Activated CD8-positive, alpha-beta T cell treated with anti-CD3 and anti-CD28 coated beads, Interleukin-2, amount 10 ng/mL, durations not matched to agents 7 days and 5 days (primary cell): ENCODE measurements at regions of chr14 and their contacts with region 1.

Region 1: GRCh38 chr14:104768437-104769323 is 15.7 kb downstream of the SIVA1 start:
- DNase-seq: peak; percentile 94
- ATAC-seq: peak; percentile 93
- H3K4me3 Mint-ChIP-seq: no peak overlapping the region
- H3K27ac Mint-ChIP-seq: peak overlapping the region; percentile 52
- H3K4me1 Mint-ChIP-seq: peaks cover 6% of the 10 kb centered on the region
- H3K27me3 Mint-ChIP-seq: no peaks in the 10 kb centered on the region

Region 2: DNA sequence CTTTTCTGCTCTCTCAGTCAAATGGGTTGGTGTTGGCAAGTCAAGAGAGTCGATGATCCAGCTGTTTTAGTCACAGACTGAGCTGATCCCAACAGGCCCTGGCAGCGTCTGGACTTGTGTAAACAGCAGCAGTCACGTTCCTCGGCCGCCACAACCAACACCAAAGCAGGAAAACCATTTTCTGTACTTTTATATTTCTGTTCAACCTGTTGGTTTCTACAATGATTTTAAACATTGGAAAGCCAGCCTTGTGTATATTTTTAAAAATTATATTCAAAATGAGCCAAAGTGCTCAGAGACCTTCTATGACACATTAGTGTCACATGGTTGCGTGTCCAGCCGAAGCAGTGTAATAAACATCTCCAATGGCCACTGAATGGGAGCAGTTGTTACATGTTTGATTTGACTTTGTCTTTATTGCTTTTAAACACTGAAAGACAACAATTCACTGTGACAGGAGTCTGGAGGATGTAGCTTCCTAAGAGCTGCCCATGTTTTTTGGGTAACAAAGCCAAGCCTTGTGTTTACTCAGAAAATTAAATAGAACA is 21.7 kb before region 1 on chr14:
- CTCF ChIA-PET with region 1: interaction called, 12 read pairs
- POLR2A ChIA-PET with region 1: no interaction called
- DNase-seq: no peak
- ATAC-seq: no peak
- H3K4me3 Mint-ChIP-seq: no peak overlapping the region
- H3K27ac Mint-ChIP-seq: no peak overlapping the region
- H3K4me1 Mint-ChIP-seq: peaks cover 33% of the 10 kb centered on the region
- H3K27me3 Mint-ChIP-seq: no peaks in the 10 kb centered on the region

Region 3: GRCh38 chr14:104752735-104753531 is 15.7 kb before region 1 on chr14 and contains the start of gene SIVA1:
- CTCF ChIA-PET with region 1: interaction called, 17 read pairs
- POLR2A ChIA-PET with region 1: interaction called, 9 read pairs
- DNase-seq: peak; percentile 100
- ATAC-seq: peak; percentile 94
- H3K4me3 Mint-ChIP-seq: peak within 1 kb of the TSS; percentile 91
- H3K27ac Mint-ChIP-seq: peak within 1 kb of the TSS; percentile 96
- H3K4me1 Mint-ChIP-seq: peaks cover 54% of the 10 kb centered on the region
- H3K27me3 Mint-ChIP-seq: no peaks in the 10 kb centered on the region
- total RNA-seq, gene SIVA1: 175 to 186 TPM

Region 4: DNA sequence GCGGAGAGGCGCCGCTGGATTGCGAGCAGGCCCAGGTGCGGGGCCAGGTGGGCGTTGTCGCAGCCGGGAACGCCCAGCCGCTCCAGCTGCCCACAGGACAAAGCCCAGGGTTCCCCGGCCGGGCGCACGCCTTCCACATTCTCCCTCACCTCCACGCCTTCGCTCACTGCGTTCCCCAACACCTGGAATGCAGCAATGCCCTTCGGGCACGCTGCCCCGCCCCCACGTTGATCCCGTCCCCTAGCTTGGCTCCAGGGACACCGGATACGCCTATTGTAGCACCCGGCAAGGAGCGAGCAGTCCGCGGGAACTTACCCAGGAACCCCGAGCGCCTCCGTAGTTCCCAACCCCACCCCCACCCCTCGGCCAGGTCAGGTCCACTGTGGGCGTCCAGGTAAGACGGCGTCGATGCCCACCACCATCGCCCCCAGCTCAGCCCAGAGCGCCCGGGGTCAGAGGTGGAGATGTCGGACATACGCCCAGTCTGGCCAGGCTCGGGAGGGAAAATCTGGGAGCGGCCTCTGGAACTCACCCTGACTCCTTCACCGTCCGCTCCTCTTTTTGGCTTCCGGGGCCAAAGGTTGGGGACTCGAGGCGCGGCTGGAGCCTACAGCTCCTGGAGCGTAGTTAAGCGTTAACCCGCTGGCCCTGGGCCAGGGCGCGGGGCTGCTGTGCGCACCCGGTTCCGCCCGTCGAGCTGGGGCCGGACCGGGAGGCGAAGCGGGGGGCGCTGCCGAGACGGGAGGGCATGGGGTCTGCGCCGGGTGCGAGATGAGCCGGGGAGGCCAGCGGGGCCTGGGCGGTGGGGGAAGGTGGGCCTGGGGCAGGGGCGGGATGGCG is 95.8 kb after region 1 on chr14:
- CTCF ChIA-PET with region 1: no interaction called
- POLR2A ChIA-PET with region 1: no interaction called
- DNase-seq: no peak
- ATAC-seq: no peak
- H3K4me3 Mint-ChIP-seq: peak overlapping the region; percentile 45
- H3K27ac Mint-ChIP-seq: no peak overlapping the region
- H3K4me1 Mint-ChIP-seq: peaks cover 6% of the 10 kb centered on the region
- H3K27me3 Mint-ChIP-seq: peaks cover 23% of the 10 kb centered on the region